Sigmoid colon (tissue), 7 donors: ENCODE measurements at regions of chr17 and their contacts with region 1.

Region 1: DNA sequence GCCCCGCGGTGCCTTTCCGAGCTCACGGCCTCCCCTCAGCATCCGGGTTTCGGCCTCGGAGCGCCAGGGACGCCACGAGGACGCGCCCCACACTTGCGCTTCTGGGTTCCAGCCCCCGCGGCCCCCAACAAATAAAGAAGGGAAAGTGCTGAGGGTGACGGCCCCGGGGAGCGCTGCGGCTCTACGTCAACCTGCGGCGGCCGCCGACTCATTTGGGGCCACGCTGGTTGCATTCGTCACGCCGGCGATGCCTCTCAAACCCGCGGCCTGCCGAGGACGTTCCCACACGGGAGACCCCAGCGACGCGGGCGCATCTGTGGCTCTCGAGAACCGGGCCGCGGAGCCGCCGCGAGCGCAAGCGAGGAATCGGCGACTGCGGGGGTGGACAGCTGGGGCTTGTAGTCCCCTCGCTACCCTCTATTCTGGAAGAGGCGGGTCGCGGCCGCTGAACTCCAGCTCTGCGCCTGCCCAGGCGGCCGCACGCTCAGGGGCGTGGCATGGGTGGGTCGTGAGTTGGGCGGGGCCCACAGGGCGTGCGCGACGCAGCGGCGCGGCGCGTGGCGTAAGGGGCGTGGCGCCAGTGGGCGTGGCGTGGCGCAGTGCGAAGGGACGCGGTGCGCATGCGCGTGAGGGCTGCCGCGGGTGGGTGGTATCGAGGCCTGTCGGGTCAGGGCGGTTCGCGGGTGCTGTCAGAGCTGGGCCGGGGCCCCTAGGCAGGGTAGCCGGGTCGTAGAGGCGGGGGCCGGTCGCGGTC is at the start of gene AMZ2:
- DNase-seq: peak; percentile 96
- H3K4me3 ChIP-seq: peak within 1 kb of the TSS; percentile 80 to 91 (median 80)
- H3K27ac ChIP-seq: peak within 1 kb of the TSS; percentile 95 to 99 (median 98)
- H3K4me1 ChIP-seq: peaks cover 0 to 21% (median 11%) of the 10 kb centered on the region in 4 donors
- H3K27me3 ChIP-seq: no peaks in the 10 kb centered on the region
- CTCF ChIP-seq: no peak
- EP300 ChIP-seq: no peak
- POLR2A ChIP-seq: peak; percentile 67 to 79
- total RNA-seq, gene AMZ2: 55.9 to 80.1 (median 62.8) TPM

Region 2: DNA sequence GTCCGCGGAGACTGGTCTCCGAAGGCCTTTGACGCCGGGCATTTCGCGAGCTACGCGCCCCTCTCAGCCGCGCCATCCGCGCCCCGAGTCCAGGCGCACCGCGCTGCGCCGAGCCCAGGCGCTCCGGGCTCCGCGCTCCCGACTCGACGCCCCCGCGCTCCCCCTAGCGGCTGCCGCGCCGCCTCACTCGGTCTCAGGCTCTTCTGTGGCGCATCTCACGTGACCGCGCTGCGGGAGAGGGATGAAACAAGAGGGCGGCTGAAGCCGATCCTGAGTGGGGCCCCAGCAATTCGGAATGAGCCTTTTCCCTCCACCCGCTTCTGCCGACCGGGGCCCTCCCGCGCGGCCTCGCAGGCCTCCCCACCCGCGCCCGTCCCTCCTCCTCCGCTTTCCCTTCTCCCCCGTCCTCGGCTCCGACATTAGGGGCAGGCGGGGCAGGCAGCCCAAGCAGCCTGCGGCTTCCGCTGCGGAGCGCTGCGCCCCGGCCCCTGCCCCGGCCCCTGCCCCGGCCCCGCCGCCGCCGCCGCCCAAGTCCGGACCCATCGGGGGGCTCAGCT is 42.3 kb before region 1 on chr17:
- intact Hi-C with region 1: loop called (anchors 2 kb)
- DNase-seq: peak; percentile 94
- H3K4me3 ChIP-seq: peak overlapping the region; percentile 66 to 96 (median 80)
- H3K27ac ChIP-seq: peak overlapping the region; percentile 88 to 89 (median 88)
- H3K4me1 ChIP-seq: peaks cover 0 to 30% (median 17%) of the 10 kb centered on the region in 4 donors
- H3K27me3 ChIP-seq: peaks cover 3 to 19% (median 16%) of the 10 kb centered on the region in 3 donors
- CTCF ChIP-seq: peak; percentile 44 to 96 (median 58)
- EP300 ChIP-seq: no peak
- POLR2A ChIP-seq: peak; percentile 28 to 53

Region 3: DNA sequence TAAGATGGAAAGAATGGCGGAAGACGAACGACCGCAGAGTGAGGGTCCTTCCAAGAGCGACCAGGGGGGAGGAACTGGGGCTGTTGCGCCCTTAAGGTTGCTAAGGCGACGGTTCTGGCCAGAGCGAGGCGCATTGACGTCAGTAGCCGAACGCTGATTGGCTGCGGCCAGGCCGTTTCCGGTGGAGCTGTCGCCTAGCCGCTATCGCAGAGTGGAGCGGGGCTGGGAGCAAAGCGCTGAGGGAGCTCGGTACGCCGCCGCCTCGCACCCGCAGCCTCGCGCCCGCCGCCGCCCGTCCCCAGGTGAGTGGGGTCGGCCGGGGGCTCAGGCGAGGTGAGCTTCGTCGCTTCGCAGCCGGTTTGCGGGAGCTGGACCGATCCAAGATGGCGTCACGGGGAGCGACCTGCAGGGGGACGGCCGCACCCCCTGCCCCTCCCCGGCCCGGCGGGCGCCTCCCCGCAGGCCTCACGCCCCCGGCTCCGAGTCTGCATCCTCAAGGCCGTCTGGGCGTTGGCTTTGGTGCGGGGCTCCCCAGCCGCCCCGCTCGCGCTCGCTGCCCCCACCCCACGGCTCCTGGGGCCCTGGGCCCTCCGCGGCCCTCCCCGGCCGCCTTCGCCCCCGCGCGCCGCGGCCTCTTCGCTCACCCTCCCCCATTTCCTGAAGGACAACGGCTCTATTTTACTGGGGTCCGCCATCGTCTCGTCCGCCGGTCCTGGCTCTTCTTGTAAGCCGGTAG is 264.8 kb after region 1 on chr17 and contains the start of gene PRKAR1A:
- intact Hi-C with region 1: loop called (anchors 5 kb)
- DNase-seq: peak; percentile 98
- H3K4me3 ChIP-seq: peak within 1 kb of the TSS; percentile 72 to 95 (median 88)
- H3K27ac ChIP-seq: peak within 1 kb of the TSS; percentile 97 to 99 (median 98)
- H3K4me1 ChIP-seq: peaks cover 0 to 32% (median 27%) of the 10 kb centered on the region in 4 donors
- H3K27me3 ChIP-seq: no peaks in the 10 kb centered on the region
- CTCF ChIP-seq: no peak
- EP300 ChIP-seq: peak in 2 of 4 donors; percentile 7 to 58
- POLR2A ChIP-seq: peak; percentile 74 to 84
- total RNA-seq, gene PRKAR1A: 206 to 268 (median 230) TPM